Endothelial cell of umbilical vein (primary cell): ENCODE measurements at regions of chrX and their contacts with region 1.

Region 1: DNA sequence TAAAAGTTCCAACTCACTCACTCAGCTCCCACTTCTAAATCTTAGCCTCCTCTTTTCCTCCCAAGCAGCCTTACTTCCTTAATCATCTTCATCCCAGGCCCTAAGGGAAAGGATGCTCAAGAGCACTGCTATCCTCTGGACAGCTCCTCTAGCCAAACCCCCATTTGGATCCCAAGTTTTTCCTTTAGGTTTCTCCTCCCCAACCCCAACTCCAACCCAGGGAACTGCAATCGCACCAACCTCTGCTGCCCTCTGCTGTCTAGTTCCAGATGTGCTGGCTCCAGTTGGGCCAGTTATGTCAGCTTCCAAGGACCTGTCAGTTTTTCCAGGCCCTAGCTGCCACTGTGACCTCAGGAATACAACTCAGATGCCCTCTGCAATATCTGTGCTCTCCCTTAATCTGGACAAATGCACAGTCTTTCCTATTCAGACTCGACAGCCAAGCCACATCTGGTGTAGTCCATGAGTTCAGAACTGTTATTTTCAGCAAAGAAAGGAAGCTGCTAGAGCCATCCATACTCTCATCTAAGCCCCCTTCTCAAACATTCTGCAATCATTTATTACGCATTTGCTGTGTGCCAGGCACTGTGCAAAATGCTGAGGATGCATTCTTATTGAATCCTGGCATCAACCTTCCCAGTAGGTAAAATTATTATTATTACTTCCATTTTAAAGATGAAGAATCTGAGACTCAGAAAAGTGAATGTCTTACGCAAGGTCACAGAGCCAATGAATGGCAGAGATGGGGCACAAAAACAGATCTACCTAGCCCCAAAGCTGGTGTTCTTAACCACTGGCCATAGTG is 12.3 kb upstream of the XPNPEP2 start:
- DNase-seq: peak; percentile 76
- H3K4me3 ChIP-seq: no peak overlapping the region
- H3K27ac ChIP-seq: no peak overlapping the region
- H3K4me1 ChIP-seq: peaks cover 43% of the 10 kb centered on the region
- H3K27me3 ChIP-seq: no peaks in the 10 kb centered on the region
- CTCF ChIP-seq: peak; percentile 64 to 74
- POLR2A ChIP-seq: no peak

Region 2: GRCh38 chrX:129637217-129638109 is 89.0 kb before region 1 on chrX:
- CTCF ChIA-PET with region 1: interaction called, 142 read pairs
- POLR2A ChIA-PET with region 1: no interaction called
- dilution Hi-C with region 1: no loop called
- intact Hi-C with region 1: loop called (anchors 1 kb)
- DNase-seq: peak; percentile 69
- H3K4me3 ChIP-seq: no peak overlapping the region
- H3K27ac ChIP-seq: peak overlapping the region; percentile 1
- H3K4me1 ChIP-seq: peaks cover 7% of the 10 kb centered on the region
- H3K27me3 ChIP-seq: no peaks in the 10 kb centered on the region
- CTCF ChIP-seq: peak; percentile 78 to 79
- POLR2A ChIP-seq: no peak

Region 3: DNA sequence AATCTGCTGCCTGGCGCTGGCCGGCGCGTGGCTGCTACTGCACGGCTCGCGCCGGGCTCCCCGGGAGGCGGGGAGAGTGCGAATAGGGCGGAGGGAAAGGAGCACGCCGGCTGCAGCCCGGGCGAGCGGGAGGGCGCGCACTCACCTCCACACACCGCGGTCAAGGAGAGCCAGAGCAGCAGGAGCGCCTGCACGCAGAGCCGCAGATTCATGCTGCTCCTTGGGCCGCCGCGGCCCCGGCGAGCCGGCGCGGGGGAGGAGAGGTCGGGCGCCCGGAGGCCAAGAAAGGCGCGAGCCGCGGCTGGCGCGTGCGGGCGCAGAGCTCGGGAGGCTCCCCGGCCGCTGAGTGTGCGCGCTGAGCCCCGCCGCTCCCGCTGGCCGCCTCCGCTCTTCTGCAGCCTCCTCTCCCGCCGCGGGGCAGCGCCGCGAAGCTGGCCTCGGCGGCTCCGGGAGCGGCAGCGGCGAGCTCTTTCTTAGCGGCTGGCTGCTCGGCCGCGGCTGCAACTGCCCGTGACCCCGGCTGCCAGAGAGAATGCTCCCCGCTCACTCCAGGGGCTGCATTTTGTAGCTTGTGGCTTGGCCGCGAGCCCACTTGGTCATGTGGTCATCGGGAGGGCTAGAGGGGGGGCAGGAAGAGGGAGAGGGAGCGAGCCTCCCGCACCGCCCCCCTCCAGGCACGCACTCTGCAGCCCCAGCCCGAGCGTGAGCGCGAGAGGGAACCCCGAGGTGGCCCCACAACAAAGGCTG is 71.9 kb before region 1 on chrX and contains the start of gene APLN:
- CTCF ChIA-PET with region 1: interaction called, 122 read pairs
- POLR2A ChIA-PET with region 1: interaction called, 10 read pairs
- dilution Hi-C with region 1: no loop called
- intact Hi-C with region 1: loop called (anchors 1 kb)
- DNase-seq: peak; percentile 55
- H3K4me3 ChIP-seq: peak within 1 kb of the TSS; percentile 58 to 78 (median 67)
- H3K27ac ChIP-seq: peak within 1 kb of the TSS; percentile 69
- H3K4me1 ChIP-seq: peaks cover 42% of the 10 kb centered on the region
- H3K27me3 ChIP-seq: no peaks in the 10 kb centered on the region
- CTCF ChIP-seq: no peak
- POLR2A ChIP-seq: peak; percentile 92
- total RNA-seq, gene APLN: 465 and 466 TPM in 2 replicates

Region 4: DNA sequence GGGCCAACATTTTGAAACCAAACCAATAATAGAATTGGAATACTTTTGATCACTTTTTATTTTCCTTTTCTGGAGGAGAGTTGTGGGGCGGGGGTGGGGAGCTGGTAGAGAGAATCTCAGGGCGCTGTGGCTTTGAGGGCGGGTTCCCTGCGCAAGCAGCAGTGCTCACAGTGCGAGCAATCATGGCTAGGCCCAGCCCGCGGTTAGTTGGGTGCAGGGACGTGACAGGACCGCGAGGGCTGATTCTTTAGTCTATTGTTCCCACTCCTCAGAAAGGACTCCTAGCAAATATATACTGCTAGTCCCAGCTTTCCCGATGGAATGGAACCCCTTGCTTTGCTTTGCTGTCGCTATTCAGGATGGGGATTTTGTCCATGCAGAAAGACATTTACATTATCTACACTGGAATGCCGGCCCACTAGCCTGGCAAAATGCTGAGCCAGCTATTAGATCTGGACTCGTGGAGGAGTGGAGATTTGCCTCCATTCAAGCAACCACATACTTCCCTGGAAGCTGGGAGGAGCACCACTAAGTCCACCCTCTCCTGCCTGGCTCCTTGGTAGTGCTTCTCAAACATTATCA is 47.8 kb before region 1 on chrX:
- CTCF ChIA-PET with region 1: interaction called, 22 read pairs
- POLR2A ChIA-PET with region 1: no interaction called
- dilution Hi-C with region 1: no loop called
- intact Hi-C with region 1: no loop called
- DNase-seq: peak; percentile 1
- H3K4me3 ChIP-seq: peak overlapping the region in 1 of 3 experiments; percentile 25
- H3K27ac ChIP-seq: peak overlapping the region; percentile 15
- H3K4me1 ChIP-seq: peaks cover 19% of the 10 kb centered on the region
- H3K27me3 ChIP-seq: no peaks in the 10 kb centered on the region
- CTCF ChIP-seq: no peak
- POLR2A ChIP-seq: no peak

Region 5: DNA sequence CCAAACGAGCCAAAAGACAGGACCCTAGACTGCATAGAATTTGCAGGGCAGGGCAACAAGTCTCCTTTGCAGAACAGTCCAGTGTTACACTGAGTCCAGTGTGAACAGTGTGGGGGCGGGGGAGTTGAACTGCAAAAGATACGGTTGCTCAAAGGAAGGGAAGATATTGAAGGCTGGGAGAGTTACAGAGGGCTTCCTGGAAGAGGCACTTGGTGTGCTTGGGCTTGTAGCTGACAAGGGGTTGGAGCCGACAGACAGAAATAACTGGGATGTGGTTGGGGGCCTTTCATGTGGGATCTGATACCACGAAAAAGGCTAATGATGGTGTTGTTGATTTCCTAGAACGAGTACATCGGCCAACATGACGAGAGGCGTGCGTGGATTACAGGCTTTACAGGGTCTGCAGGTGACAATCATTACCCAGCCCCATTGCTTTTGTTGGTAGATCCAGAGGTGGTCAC is 18.4 kb after region 1 on chrX:
- CTCF ChIA-PET with region 1: no interaction called
- POLR2A ChIA-PET with region 1: no interaction called
- dilution Hi-C with region 1: no loop called
- intact Hi-C with region 1: no loop called
- DNase-seq: no peak
- H3K4me3 ChIP-seq: no peak overlapping the region
- H3K27ac ChIP-seq: no peak overlapping the region
- H3K4me1 ChIP-seq: no peaks in the 10 kb centered on the region
- H3K27me3 ChIP-seq: no peaks in the 10 kb centered on the region
- CTCF ChIP-seq: no peak
- POLR2A ChIP-seq: no peak

Region 6: DNA sequence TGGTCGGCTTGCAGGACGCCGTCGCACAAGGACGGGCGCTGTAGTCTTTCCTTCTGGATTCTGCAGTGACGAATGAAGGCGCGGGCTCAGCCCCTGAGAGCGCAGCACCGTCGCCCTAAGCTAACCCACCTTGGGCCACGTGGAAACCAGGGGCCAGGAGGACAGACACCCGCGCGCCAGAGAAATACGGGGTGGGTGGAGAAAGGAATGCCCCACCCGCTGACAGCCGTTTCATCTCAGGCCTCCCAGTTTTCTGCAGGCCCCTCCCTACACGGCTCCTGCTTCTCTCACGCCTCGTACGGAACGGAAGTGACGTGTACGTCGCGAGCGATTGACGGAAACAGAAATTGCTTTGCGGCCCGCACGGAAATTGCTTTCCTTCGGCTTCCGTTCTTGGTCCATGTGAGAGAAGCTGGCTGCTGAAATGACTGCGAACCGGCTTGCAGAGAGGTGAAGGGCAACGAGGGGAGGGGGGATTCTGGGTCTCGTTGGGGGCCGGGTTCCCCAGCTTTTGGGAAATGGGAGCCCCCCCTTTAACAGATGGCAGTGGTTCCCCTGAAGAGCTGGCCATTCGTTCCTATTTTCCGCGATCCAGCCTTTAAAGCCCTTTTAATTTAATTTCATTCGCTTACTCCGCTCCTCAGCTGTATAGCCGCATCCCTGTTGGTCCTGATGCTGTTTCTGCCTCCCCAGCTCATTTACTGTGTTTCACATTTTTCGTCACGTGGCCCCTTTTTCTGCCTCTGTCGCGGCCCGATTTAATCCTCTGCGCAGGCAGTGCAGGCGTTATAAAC is 179.5 kb after region 1 on chrX and contains the start of gene UTP14A:
- CTCF ChIA-PET with region 1: no interaction called
- POLR2A ChIA-PET with region 1: no interaction called
- dilution Hi-C with region 1: no loop called
- intact Hi-C with region 1: loop called (anchors 1 kb)
- DNase-seq: peak; percentile 88
- H3K4me3 ChIP-seq: peak within 1 kb of the TSS; percentile 69 to 97 (median 96)
- H3K27ac ChIP-seq: peak within 1 kb of the TSS; percentile 64
- H3K4me1 ChIP-seq: peaks cover 6% of the 10 kb centered on the region
- H3K27me3 ChIP-seq: no peaks in the 10 kb centered on the region
- CTCF ChIP-seq: no peak
- POLR2A ChIP-seq: peak; percentile 61
- total RNA-seq, gene UTP14A: 23.5 and 27.7 TPM in 2 replicates

Region 7: DNA sequence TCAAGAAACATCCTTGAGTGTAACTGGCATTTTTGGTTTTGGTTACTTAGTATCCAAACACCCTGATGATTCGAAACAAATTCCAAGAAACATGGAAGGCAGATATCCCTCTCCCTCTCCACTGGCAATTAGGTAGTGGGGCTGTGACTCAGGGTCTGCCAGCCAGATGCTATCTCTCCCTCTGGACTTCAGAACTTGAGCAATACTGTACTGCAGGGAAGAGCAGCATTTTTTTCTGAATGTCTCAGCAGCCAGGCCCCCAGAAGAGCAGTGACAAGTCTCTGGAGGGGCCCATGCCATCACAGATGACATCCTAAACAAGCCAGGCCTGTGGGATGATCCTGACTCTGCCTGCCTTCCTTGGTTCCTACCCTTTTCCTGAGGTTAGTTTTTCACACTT is 218.6 kb after region 1 on chrX:
- CTCF ChIA-PET with region 1: no interaction called
- POLR2A ChIA-PET with region 1: no interaction called
- dilution Hi-C with region 1: no loop called
- intact Hi-C with region 1: no loop called
- DNase-seq: no peak
- H3K4me3 ChIP-seq: no peak overlapping the region
- H3K27ac ChIP-seq: no peak overlapping the region
- H3K4me1 ChIP-seq: no peaks in the 10 kb centered on the region
- H3K27me3 ChIP-seq: peaks cover 0 to 4% of the 10 kb centered on the region in 2 experiments
- CTCF ChIP-seq: no peak
- POLR2A ChIP-seq: no peak

Region 8: DNA sequence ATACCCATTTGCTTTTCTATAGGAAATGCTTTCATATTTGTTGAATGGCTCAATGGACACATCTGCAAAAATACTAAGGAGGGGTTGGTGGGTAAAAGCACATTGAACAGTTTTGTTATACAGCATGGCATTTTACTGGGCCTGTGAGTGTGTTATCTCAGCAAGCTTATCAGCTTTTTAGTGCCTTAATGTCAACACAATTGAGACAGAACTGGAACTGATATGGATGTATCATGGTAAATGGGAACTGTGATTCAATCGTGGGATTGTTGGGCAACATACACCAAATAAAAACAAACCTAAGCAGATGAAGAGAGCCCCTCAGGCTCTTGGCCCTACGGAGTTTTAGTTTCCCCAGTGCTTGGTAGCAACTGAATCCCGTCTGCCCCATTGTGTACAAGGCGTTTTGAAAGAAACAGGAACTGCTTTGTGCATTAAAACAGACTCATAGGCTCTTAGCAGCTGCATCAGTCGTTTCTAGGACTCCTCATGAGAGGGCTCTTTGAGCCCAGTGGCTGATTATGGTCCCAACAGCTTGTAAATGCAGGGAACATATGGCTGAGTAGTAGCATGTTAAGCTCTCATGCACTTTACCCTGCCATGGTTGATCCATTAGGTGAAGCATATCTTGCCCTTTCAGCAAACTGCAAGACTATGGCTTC is 651.6 kb after region 1 on chrX:
- CTCF ChIA-PET with region 1: no interaction called
- POLR2A ChIA-PET with region 1: no interaction called
- dilution Hi-C with region 1: no loop called
- intact Hi-C with region 1: no loop called
- DNase-seq: no peak
- H3K4me3 ChIP-seq: no peak overlapping the region
- H3K27ac ChIP-seq: no peak overlapping the region
- H3K4me1 ChIP-seq: no peaks in the 10 kb centered on the region
- H3K27me3 ChIP-seq: no peaks in the 10 kb centered on the region
- CTCF ChIP-seq: no peak
- POLR2A ChIP-seq: no peak